ENCODE measurements at regions of chr3 and their contacts with region 1.

Region 1: GRCh38 chr3:33131331-33132018 is 17.7 kb downstream of the CRTAP start:
- DNase-seq: peak; percentile 76
- H3K4me3 ChIP-seq: no peak overlapping the region
- H3K27ac ChIP-seq: no peak overlapping the region
- H3K4me1 ChIP-seq: peaks cover 9% of the 10 kb centered on the region
- H3K27me3 ChIP-seq: no peaks in the 10 kb centered on the region
- CTCF ChIP-seq: peak; percentile 51 to 62
- POLR2A ChIP-seq: no peak

Region 2: GRCh38 chr3:32947789-32948238 is 183.7 kb before region 1 on chr3:
- CTCF ChIA-PET with region 1: interaction called, 10 read pairs
- POLR2A ChIA-PET with region 1: no interaction called
- dilution Hi-C with region 1: no loop called
- intact Hi-C with region 1: loop called (anchors 5 kb)
- DNase-seq: peak; percentile 85
- H3K4me3 ChIP-seq: no peak overlapping the region
- H3K27ac ChIP-seq: no peak overlapping the region
- H3K4me1 ChIP-seq: peaks cover 5% of the 10 kb centered on the region
- H3K27me3 ChIP-seq: no peaks in the 10 kb centered on the region
- CTCF ChIP-seq: peak; percentile 73 to 84
- POLR2A ChIP-seq: no peak

Region 3: GRCh38 chr3:33218446-33219174 is 87.1 kb after region 1 on chr3 and contains the start of gene SUSD5:
- CTCF ChIA-PET with region 1: interaction called, 26 read pairs
- POLR2A ChIA-PET with region 1: interaction called, 3 read pairs
- dilution Hi-C with region 1: no loop called
- intact Hi-C with region 1: loop called (anchors 2 kb)
- DNase-seq: peak; percentile 56
- H3K4me3 ChIP-seq: peak within 1 kb of the TSS; percentile 39 to 71 (median 54)
- H3K27ac ChIP-seq: peak within 1 kb of the TSS; percentile 28
- H3K4me1 ChIP-seq: peaks cover 13% of the 10 kb centered on the region
- H3K27me3 ChIP-seq: peaks cover 0 to 10% of the 10 kb centered on the region in 2 experiments
- CTCF ChIP-seq: no peak
- POLR2A ChIP-seq: peak; percentile 17
- total RNA-seq, gene SUSD5: 15.3 and 18.8 TPM in 2 replicates

Region 4: GRCh38 chr3:33250712-33251111 is 119.2 kb after region 1 on chr3:
- CTCF ChIA-PET with region 1: interaction called, 43 read pairs
- POLR2A ChIA-PET with region 1: no interaction called
- dilution Hi-C with region 1: no loop called
- intact Hi-C with region 1: loop called (anchors 1 kb)
- DNase-seq: no peak
- H3K4me3 ChIP-seq: no peak overlapping the region
- H3K27ac ChIP-seq: no peak overlapping the region
- H3K4me1 ChIP-seq: no peaks in the 10 kb centered on the region
- H3K27me3 ChIP-seq: no peaks in the 10 kb centered on the region
- CTCF ChIP-seq: no peak
- POLR2A ChIP-seq: no peak

Region 5: GRCh38 chr3:33313331-33313730 is 181.9 kb after region 1 on chr3:
- CTCF ChIA-PET with region 1: interaction called, 44 read pairs
- POLR2A ChIA-PET with region 1: no interaction called
- dilution Hi-C with region 1: no loop called
- intact Hi-C with region 1: loop called (anchors 1 kb)
- DNase-seq: no peak
- H3K4me3 ChIP-seq: no peak overlapping the region
- H3K27ac ChIP-seq: peak overlapping the region; percentile 29
- H3K4me1 ChIP-seq: peaks cover 62% of the 10 kb centered on the region
- H3K27me3 ChIP-seq: no peaks in the 10 kb centered on the region
- CTCF ChIP-seq: no peak
- POLR2A ChIP-seq: no peak